Head of caudate nucleus (tissue), 42 donors: ENCODE measurements at regions of chr10 and their contacts with region 1.

Region 1: DNA sequence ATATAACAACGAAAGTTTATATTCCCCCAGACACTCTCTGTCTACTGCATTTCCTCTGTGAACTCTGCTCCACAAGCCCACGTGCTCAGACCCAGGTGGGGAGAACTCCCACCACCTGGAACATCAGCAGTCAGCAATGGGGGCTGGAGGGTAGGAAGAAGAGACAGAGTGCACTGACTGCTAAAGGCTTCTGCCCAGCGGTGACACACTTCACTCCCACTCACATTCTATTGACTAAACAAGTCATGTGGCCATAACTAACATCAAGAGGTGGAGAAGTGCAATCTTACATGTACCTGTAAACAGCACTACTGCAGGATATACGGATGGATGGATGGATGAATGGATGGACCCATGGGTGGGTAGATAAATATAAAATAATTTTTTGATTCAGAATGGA is 122.2 kb downstream of the MPP7 start:
- DNase-seq: no peak

Region 2: DNA sequence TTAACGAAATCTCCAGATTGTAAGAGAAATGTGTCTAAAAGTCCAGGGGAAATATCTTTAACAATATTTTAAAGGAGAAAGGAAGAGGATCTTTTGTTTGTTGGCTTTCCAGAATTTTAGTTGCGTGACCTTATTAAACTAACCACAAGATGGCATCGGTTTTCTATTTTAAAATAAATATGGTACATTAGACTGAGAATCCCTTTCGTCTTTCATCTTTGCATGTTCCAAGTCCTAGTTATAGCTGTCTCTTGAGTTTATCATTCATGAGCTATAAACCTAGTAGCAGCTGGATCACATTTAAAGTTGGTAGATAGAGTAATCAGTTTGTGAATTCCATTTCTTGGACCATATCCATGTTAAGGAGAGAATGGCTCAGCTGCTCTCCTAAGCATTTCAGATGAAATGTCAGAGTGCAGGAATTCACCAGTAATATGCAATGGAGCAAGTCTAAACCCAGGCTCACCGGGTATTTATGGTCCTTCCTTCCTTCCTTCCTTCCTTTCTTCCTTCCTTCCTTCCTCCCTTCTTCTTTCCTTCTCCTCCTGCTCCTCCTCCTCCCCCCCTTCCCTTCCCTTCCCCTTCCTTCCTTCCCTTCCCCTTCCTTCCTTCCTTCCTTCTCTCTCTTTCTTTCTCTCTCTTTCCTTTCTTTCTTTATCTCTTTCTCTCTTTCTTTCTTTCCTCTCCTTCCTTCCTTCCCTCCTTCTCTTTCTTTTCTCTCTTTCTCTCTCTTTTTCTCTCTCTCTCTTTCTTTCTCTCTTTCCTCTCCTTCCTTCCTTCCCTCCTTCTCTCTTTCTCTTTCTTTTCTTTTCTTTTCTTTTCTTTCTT is 734.3 kb before region 1 on chr10:
- intact Hi-C with region 1: loop called (anchors 10 kb)
- DNase-seq: no peak

Region 3: GRCh38 chr10:27742195-27743011 is 438.3 kb before region 1 on chr10:
- intact Hi-C with region 1: loop called (anchors 10 kb)
- DNase-seq: peak; percentile 18 to 84 (median 68)

Region 4: DNA sequence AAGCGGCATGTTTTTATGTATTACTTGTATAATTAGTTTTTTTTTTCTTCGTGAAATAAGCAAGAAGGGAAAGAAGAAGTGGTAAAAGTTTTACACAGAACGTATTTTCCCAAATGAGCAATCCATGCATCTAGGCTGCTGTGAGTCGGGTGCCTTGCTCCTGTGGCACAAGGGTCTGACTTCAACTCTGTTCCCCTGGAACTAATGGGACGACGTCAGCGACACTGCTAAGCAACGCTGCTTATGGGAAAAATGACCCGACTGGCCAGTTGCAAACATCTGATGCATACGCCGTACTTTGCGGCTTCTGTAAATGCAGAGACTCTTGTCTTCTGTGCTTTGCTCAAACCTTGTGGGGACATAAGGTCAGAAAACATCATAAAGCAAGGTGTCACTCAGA is 55.9 kb after region 1 on chr10:
- intact Hi-C with region 1: no loop called
- DNase-seq: no peak